HEK293 (cell line): ENCODE measurements at regions of chr17 and their contacts with region 1.

Region 1: GRCh38 chr17:74361230-74362068 is at the start of gene BTBD17:
- H3K4me3 ChIP-seq: no peak within 1 kb of the TSS
- H3K27ac ChIP-seq: no peak within 1 kb of the TSS
- H3K4me1 ChIP-seq: no peaks in the 10 kb centered on the region
- CTCF ChIP-seq: peak; percentile 79

Region 2: DNA sequence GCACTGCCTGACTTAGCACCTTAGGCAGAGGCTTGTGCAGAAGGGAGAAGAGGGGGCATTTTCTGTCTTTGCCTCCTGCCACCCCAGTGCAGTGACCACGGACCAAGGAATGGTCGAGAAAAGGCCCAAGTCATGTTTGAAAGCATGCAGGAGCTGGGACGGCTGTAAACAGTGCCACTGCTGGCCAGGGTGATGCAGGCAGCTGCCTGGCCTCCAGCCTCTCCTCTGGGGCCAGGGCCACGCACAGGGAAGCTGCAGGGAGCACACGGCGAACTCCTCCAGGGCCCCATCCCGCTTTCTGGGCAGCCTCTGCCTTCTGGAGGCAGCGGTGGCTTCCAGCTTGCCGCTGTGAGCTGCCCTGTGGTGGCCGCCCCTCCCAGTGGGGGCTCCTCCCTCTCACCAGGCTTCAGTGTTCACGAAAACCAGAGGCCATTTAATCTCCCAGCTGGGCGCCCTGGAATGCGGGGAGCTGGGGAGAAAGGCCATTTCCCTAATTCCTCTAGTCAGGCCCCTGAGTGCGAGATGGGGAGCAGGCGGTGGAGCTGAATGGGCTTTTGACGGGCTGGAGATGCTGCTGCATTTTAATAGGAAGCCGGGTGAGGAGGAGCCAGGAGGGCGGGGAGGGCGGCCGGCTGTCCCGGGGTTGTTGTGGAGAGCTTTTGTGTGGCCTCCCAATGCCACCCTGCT is 116.2 kb before region 1 on chr17:
- CTCF ChIA-PET with region 1: no interaction called
- POLR2A ChIA-PET with region 1: no interaction called
- H3K4me3 ChIP-seq: no peak overlapping the region
- H3K27ac ChIP-seq: no peak overlapping the region
- H3K4me1 ChIP-seq: no peaks in the 10 kb centered on the region
- CTCF ChIP-seq: no peak

Region 3: GRCh38 chr17:74305865-74306654 is 55.4 kb before region 1 on chr17:
- CTCF ChIA-PET with region 1: interaction called, 104 read pairs
- POLR2A ChIA-PET with region 1: no interaction called
- H3K4me3 ChIP-seq: no peak overlapping the region
- H3K27ac ChIP-seq: no peak overlapping the region
- H3K4me1 ChIP-seq: no peaks in the 10 kb centered on the region
- CTCF ChIP-seq: no peak